AG04449 (cell line): ENCODE measurements at regions of chr12 and their contacts with region 1.

Region 1: GRCh38 chr12:50763639-50764285 is at the start of gene ATF1:
- DNase-seq: peak; percentile 38
- H3K4me3 ChIP-seq: peak within 1 kb of the TSS; percentile 89
- CTCF ChIP-seq: no peak

Region 2: DNA sequence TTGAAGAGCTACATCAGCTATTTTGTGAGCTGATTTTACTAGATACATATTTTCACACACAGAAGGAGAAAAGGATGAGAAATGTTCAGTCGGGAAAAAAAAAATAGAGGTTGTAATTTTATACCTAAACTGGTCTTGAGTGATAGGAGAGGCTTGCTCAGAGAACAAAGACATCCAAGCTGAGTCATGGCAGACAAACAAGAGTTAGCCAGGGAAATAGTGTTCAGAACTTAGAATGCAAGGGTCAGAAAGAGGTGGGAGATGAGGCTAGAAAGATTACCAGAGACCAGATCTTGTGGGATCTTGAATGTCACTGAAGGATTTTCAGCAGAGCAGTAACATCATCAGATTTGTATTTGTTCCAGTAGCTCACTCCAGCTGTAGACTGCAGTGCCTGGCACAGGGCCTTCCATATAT is 121.7 kb before region 1 on chr12:
- CTCF ChIA-PET with region 1: no interaction called
- POLR2A ChIA-PET with region 1: no interaction called
- DNase-seq: no peak
- H3K4me3 ChIP-seq: no peak overlapping the region
- CTCF ChIP-seq: no peak

Region 3: GRCh38 chr12:50776749-50777728 is 13.3 kb after region 1 on chr12:
- CTCF ChIA-PET with region 1: interaction called, 87 read pairs
- POLR2A ChIA-PET with region 1: interaction called, 5 read pairs
- DNase-seq: no peak
- H3K4me3 ChIP-seq: no peak overlapping the region
- CTCF ChIP-seq: no peak

Region 4: GRCh38 chr12:50786498-50787231 is 22.9 kb after region 1 on chr12:
- CTCF ChIA-PET with region 1: interaction called, 18 read pairs
- POLR2A ChIA-PET with region 1: interaction called, 7 read pairs
- DNase-seq: peak; percentile 82
- H3K4me3 ChIP-seq: no peak overlapping the region
- CTCF ChIP-seq: no peak

Region 5: DNA sequence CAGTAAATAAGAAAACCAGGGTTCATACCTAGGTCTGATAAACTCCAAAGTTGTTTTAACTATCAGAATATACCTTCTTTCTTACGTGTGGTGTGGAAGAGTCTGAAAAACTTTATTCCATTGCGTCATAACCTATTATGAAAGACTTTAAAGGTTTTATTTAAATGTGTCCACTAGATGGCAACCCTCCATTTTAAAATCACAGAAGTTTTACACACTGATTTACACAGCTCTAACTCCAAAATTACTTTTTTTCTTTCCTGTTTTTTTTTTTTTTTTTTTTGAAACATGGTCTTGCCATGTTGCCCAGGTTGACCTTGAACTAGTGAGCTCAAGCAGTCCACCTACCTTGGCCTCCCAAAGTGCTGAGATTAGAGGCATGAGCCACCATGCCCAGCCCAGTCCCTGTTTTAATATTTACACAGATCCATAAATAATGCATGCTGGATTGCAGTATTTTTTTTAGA is 61.6 kb after region 1 on chr12:
- CTCF ChIA-PET with region 1: interaction called, 12 read pairs
- POLR2A ChIA-PET with region 1: interaction called, 3 read pairs
- DNase-seq: peak; percentile 26
- H3K4me3 ChIP-seq: no peak overlapping the region
- CTCF ChIP-seq: no peak

Region 6: DNA sequence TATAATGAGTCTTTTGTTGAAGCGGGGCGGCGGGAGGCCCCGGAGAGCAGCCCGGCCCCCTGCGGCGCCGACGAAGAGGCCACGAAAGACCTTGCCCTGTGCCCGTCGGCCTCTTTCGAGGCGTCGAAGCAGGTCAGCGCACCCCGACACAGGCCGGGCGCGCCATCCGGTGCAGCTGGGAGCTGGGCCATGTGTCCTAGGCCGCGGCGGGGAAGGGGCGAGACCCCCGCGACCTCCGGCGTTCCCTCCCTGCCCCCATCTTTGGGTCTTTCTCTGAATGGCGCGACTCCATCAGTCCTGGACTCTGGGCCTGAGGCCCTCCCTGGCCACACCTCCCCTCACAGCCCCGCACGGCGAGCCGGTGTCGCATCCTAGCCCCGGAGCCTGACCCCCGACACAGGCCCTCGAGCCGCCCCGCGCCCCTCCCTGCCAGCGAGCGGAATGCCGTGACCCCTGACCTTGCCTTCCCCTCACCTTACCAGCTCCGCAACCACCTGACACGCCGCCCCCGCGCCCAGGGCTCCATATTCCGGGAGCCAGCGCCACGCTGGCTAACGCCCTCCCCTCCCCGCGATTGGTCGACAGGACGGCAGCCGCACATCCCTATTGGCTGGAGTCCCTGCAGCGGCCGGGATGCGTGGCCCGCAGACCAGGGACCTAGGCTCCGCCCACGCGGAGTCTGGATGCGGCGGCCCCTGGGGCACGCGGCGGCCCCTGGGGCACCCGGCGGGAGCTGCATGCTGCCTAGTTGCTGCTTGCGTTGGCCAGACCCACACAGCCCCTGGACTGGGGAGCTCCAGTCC is 262.3 kb after region 1 on chr12 and contains the start of gene SLC11A2:
- CTCF ChIA-PET with region 1: interaction called, 15 read pairs
- POLR2A ChIA-PET with region 1: interaction called, 4 read pairs
- DNase-seq: peak; percentile 59
- H3K4me3 ChIP-seq: peak within 1 kb of the TSS; percentile 95
- CTCF ChIP-seq: no peak